ENCODE measurements at regions of chr5 and their contacts with region 1.

Region 1: DNA sequence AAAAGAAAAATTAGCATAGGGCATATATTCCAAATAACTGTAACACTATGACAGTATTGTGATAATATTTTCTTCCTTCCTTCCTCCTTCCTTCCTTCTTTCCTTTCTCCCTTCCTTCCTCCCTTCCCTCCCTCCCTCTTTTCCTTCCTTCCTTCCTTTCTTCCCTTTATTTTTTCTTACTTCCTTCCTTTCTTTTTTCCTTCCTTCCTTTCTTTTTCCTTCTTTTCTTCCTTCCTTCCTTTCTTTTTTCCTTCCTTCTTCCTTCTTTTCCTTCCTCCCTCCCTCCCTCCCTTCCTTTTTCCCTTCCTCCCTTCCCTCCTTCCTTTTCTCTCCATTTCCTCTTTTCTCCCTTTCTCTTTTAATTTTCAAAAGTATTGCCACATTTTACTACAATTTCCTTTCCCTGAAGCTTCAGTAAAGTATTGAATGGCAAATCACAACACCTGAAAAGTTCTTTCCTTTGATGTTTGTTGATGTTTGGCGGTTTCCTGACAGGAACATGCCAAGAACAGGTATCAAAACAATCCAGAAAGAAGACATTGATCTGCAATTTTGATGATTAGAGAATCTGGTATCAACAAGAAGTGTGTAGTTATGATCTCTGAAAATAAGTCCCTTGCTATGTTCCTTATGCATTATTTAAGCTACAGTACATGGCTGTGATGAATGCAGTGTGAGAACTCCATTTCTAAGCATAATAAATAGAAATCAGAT is 253.1 kb upstream of the EDIL3 start:
- DNase-seq: no peak
- H3K4me3 ChIP-seq: no peak overlapping the region
- H3K27ac ChIP-seq: no peak overlapping the region
- H3K4me1 ChIP-seq: no peaks in the 10 kb centered on the region
- CTCF ChIP-seq: no peak

Region 2: GRCh38 chr5:84603568-84604185 is 34.1 kb before region 1 on chr5:
- CTCF ChIA-PET with region 1: no interaction called
- POLR2A ChIA-PET with region 1: interaction called, 12 read pairs
- intact Hi-C with region 1: no loop called
- DNase-seq: no peak
- H3K4me3 ChIP-seq: no peak overlapping the region
- H3K27ac ChIP-seq: no peak overlapping the region
- H3K4me1 ChIP-seq: no peaks in the 10 kb centered on the region
- CTCF ChIP-seq: no peak

Measured in OCI-LY7 (cell line).